ENCODE measurements at regions of chr2 and their contacts with region 1.

Region 1: DNA sequence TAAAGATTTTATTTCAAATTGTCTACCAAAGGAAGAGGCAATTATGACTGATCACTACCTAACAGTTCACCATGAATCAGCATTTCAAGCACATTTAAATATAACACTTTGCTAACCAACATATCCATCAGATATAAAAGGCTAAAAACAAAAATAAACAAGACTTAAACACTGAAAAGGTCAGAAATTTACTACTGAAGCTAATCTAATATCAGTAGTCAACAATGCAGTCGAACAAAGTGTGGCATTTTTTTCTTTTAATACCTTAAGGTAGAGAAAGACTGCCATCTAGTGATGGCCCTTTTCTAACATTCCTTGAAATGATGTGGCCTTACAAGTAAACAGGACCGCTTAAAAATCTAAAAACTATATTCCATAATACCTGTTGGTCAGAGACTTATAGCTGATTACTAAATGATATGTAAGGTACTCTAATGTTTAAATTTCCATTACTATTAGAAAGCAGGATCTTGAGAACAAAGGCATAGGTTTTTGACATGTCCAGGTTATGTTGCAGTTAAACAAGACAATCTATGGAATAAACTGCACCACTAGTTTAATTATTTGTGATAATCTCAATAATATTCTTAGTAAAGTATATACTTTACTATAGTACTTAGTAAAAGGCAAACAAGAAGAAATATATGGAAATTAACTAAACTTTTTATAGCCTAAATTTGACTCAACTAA is 80.0 kb downstream of the EXOC6B start:
- DNase-seq: no peak
- H3K4me3 Mint-ChIP-seq: no peak overlapping the region
- H3K27ac Mint-ChIP-seq: no peak overlapping the region
- H3K4me1 Mint-ChIP-seq: no peaks in the 10 kb centered on the region
- H3K27me3 Mint-ChIP-seq: no peaks in the 10 kb centered on the region

Region 2: DNA sequence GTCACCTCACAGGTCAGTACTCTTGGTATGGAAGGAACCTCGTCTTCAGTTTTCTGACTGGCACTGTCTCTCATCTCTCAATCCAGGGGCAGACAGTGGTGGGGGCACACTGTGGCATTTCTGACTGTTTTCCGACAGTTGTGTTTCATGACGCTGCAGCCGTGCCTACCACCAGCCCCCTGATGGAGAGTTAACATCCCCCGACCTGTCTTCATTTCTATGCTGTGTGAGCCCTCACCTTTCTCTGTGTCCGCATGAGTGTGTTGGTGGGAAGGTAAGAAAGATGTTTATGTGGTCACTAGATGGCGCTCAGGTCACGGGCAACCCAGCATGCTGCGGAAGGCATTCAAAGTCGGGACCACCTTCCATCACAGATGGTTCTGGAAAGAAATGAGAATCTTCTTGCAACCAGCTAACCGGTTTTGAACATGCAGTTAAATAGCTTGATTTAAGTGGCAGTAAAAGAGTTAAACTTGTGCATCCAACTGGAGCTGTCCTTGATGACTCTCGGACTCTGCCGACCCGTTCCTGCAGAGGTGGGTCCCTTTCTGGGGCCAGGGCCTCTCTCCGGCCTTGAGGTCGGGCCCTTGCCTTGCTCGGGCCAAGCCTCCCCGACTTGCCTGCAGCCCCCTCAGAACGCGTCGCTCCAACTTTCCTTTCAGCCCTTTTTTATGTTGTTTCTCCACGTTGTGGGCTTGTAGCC is 1200.1 kb before region 1 on chr2:
- intact Hi-C with region 1: loop called (anchors 5 kb)
- DNase-seq: peak; percentile 18
- H3K4me3 Mint-ChIP-seq: peak overlapping the region; percentile 13
- H3K27ac Mint-ChIP-seq: no peak overlapping the region
- H3K4me1 Mint-ChIP-seq: peaks cover 2% of the 10 kb centered on the region
- H3K27me3 Mint-ChIP-seq: peaks cover 7% of the 10 kb centered on the region

Region 3: DNA sequence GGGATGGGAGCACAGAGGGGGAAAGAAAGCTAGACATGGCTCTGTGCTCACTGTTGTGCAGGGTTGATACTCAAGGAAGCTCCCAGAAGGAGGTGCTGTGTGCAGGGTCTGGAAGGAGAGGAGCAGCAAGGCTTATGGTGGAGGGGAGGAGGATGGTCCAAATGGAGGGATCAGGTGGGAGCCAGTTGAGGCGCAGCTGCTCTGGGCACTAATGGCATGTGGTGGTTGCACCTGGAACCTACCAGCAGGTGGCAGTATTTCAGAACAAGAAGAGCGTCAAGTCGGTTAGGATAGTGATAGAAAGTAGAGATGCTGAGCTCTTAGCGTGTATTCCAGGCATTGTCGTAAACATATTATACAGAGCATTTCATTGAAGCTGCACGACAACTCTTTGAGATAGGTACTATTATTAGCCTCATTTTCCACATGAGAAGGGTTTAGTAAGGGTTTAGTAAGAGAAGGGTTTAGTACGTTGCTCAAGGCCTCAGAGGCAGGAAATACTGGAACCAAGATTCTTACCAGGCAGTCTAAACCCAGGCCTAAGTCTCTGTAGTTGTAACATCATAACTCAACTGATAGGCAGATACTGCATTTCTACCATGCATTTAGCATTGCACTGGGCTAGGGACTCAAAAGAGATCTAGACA is 821.8 kb before region 1 on chr2:
- intact Hi-C with region 1: loop called (anchors 5 kb)
- DNase-seq: peak; percentile 26
- H3K4me3 Mint-ChIP-seq: no peak overlapping the region
- H3K27ac Mint-ChIP-seq: no peak overlapping the region
- H3K4me1 Mint-ChIP-seq: no peaks in the 10 kb centered on the region
- H3K27me3 Mint-ChIP-seq: no peaks in the 10 kb centered on the region

Region 4: DNA sequence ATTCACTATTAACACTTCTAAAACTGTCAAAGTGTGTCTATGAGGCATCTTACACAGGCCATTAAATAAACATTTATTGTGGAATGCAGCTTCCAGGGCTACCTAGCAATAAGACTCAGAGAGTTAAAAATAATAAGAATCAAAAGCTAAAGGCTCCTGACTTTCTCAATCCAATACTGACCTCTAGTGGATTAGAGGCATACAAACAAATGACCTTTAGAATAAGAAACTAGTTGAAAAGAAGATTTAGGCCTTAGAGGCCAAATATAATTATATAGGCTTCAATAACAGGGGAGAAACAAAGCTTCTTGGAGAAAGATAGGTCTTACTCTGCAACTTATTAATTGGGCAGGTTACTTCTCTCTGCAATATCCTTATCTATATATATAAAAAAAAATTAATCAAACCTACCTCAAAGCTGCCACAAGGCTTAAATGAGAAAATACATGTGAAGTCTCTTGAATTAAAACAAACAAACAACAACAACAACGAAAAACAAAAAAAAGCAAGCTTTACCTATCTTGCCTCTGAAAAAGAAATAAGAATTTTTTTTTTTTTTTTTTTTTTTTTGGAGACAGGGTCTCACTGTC is 166.1 kb before region 1 on chr2:
- intact Hi-C with region 1: loop called (anchors 10 kb)
- DNase-seq: no peak
- H3K4me3 Mint-ChIP-seq: no peak overlapping the region
- H3K27ac Mint-ChIP-seq: no peak overlapping the region
- H3K4me1 Mint-ChIP-seq: no peaks in the 10 kb centered on the region
- H3K27me3 Mint-ChIP-seq: peaks cover 5% of the 10 kb centered on the region

Region 5: GRCh38 chr2:72669121-72669520 is 76.7 kb before region 1 on chr2:
- intact Hi-C with region 1: no loop called
- DNase-seq: no peak
- H3K4me3 Mint-ChIP-seq: no peak overlapping the region
- H3K27ac Mint-ChIP-seq: no peak overlapping the region
- H3K4me1 Mint-ChIP-seq: no peaks in the 10 kb centered on the region
- H3K27me3 Mint-ChIP-seq: no peaks in the 10 kb centered on the region